Activated CD8-positive, alpha-beta T cell treated with anti-CD3 and anti-CD28 coated beads for 36 hours (primary cell): ENCODE measurements at regions of chr4 and their contacts with region 1.

Region 1: DNA sequence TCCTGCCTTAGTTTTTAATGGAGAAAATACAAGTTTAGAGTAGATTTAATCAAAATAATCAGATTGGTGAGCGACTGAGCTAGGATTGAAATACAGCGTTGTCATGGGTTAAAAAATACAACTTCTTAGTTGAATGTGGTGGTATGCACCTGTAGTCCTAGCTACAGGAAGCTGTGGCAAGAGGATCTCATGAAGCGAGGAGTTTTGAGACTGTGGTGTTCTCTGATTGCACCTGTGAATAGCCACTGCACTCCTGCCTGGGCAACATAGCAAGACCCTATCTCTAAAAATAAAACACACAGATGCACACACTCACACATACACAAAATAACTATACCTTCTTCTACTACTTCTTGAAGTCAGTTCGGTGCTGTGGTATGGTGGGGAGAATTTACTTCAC is 19.8 kb upstream of the GBA3 start:
- DNase-seq: no peak
- ATAC-seq: no peak
- H3K4me3 Mint-ChIP-seq: no peak overlapping the region
- H3K27ac Mint-ChIP-seq: peak overlapping the region; percentile 55
- H3K4me1 Mint-ChIP-seq: peaks cover 69% of the 10 kb centered on the region
- H3K27me3 Mint-ChIP-seq: no peaks in the 10 kb centered on the region
- CTCF ChIP-seq: no peak

Region 2: DNA sequence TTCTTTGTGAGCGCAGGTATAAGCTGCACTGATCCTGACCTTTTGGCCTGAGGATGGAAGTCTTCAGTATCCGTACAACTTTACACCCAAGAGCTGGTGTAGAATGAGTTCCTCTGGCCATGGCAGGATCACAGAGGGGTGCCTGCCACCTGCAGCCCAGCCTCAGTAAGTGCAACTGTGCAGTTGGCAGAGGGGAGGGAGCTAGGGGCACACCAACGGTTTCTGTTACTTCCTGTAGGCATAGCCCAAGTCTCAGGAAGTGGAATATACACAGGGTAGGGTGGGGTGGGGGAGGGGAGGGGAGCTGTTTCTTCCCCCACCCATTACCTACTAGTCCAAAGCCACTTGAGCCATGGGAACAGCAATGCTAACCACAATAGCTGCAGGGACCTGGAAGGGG is 65.6 kb before region 1 on chr4:
- CTCF ChIA-PET with region 1: interaction called, 6 read pairs
- POLR2A ChIA-PET with region 1: no interaction called
- intact Hi-C with region 1: loop called (anchors 2 kb)
- DNase-seq: peak; percentile 70
- ATAC-seq: peak; percentile 99
- H3K4me3 Mint-ChIP-seq: no peak overlapping the region
- H3K27ac Mint-ChIP-seq: no peak overlapping the region
- H3K4me1 Mint-ChIP-seq: peaks cover 32% of the 10 kb centered on the region
- H3K27me3 Mint-ChIP-seq: no peaks in the 10 kb centered on the region
- CTCF ChIP-seq: peak; percentile 42

Region 3: GRCh38 chr4:22857411-22857810 is 184.5 kb after region 1 on chr4:
- CTCF ChIA-PET with region 1: no interaction called
- POLR2A ChIA-PET with region 1: no interaction called
- intact Hi-C with region 1: no loop called
- DNase-seq: no peak
- ATAC-seq: no peak
- H3K4me3 Mint-ChIP-seq: no peak overlapping the region
- H3K27ac Mint-ChIP-seq: no peak overlapping the region
- H3K4me1 Mint-ChIP-seq: no peaks in the 10 kb centered on the region
- H3K27me3 Mint-ChIP-seq: peaks cover 4% of the 10 kb centered on the region
- CTCF ChIP-seq: no peak